ENCODE measurements at regions of chr10 and their contacts with region 1.

Region 1: GRCh38 chr10:78042058-78042751 is 8.5 kb downstream of the RPS24 start:
- DNase-seq: peak in 1 of 4 experiments; percentile 49
- ATAC-seq: peak; percentile 30
- H3K4me3 ChIP-seq: no peak overlapping the region
- H3K27ac ChIP-seq: peak overlapping the region; percentile 20; the same call in 2 of the 3 replicates
- H3K4me1 ChIP-seq: peaks cover 14 to 52% of the 10 kb centered on the region in 2 experiments; a peak in 4 of 5 replicates
- H3K27me3 ChIP-seq: no peaks in the 10 kb centered on the region
- CTCF ChIP-seq: no peak
- EP300 ChIP-seq: no peak
- POLR2A ChIP-seq: no peak; the same call in 1 of the 2 replicates
- RAD21 ChIP-seq: no peak

Region 2: GRCh38 chr10:77907900-77908717 is 134.1 kb before region 1 on chr10:
- CTCF ChIA-PET with region 1: no interaction called
- POLR2A ChIA-PET with region 1: no interaction called
- in situ Hi-C with region 1: no loop called
- intact Hi-C with region 1: no loop called
- DNase-seq: peak; percentile 73 to 85 (median 73)
- ATAC-seq: peak; percentile 82
- H3K4me3 ChIP-seq: no peak overlapping the region
- H3K27ac ChIP-seq: peak overlapping the region; percentile 79
- H3K4me1 ChIP-seq: peaks cover 54 to 68% of the 10 kb centered on the region in 2 experiments
- H3K27me3 ChIP-seq: no peaks in the 10 kb centered on the region
- CTCF ChIP-seq: peak; percentile 78 to 87 (median 82)
- EP300 ChIP-seq: peak; percentile 18; the same call in 1 of the 2 replicates
- POLR2A ChIP-seq: no peak
- RAD21 ChIP-seq: peak; percentile 65 to 85

Region 3: GRCh38 chr10:78029269-78030226 is 12.7 kb before region 1 on chr10 and contains the start of gene POLR3A:
- CTCF ChIA-PET with region 1: no interaction called
- POLR2A ChIA-PET with region 1: interaction called, 23 read pairs
- in situ Hi-C with region 1: no loop called
- intact Hi-C with region 1: no loop called
- DNase-seq: peak; percentile 95 to 99 (median 96)
- ATAC-seq: peak; percentile 82
- H3K4me3 ChIP-seq: peak within 1 kb of the TSS; percentile 89
- H3K27ac ChIP-seq: peak within 1 kb of the TSS; percentile 87
- H3K4me1 ChIP-seq: peaks cover 8% of the 10 kb centered on the region in 2 experiments; a peak in 3 of 5 replicates
- H3K27me3 ChIP-seq: no peaks in the 10 kb centered on the region
- CTCF ChIP-seq: peak; percentile 91 to 96 (median 93)
- EP300 ChIP-seq: no peak; the same call in 1 of the 2 replicates
- POLR2A ChIP-seq: peak; percentile 92
- RAD21 ChIP-seq: peak; percentile 38 to 46
- polyA plus RNA-seq, gene POLR3A: 14.9 to 28.8 TPM

Region 4: DNA sequence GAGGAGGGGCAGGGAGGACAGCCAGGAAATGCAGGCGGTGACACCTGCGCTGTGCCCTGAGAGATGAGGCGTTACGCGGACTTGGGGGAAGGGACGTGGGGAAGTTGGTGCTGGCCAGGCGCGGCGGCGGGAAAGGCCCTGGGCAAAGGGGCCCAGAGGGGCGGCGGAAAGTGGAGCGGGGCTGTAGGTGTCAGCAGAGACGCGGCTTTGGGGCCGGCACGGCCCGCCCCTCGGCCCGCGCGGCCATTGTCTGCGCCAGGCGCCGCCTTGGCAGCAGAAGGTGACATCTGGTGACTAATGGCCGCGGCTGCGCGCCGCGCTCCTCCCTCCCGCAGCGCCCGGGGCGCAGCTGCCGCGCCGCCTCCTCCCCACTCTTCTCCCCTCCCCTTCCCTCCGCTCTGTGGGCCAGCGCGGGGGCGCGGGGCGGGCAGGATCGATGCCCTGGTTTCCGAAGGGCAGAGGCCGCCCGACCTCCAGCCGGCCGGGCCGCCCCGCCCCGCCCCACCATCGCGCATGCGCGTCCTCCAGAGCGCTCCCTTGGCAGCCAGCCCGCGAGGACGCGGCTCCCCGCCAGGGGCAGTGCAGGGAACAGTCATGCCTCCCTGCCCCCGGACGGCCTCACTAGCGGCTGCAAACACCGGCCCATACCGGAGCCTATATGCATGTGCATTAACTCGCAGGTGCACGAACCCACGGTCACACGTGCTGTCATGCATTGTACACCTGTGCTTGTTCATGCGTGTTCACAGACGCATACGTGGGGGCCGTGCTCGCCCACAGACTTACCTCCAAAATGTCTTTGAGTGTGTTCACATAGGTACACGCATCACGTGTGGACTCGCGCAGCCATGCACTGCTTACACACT is 261.0 kb after region 1 on chr10:
- CTCF ChIA-PET with region 1: interaction called, 5 read pairs
- POLR2A ChIA-PET with region 1: no interaction called
- in situ Hi-C with region 1: no loop called
- intact Hi-C with region 1: loop called (anchors 2 kb)
- DNase-seq: peak; percentile 95 to 100 (median 100)
- ATAC-seq: peak; percentile 97
- H3K4me3 ChIP-seq: peak overlapping the region; percentile 58
- H3K27ac ChIP-seq: peak overlapping the region; percentile 39; the same call in 2 of the 3 replicates
- H3K4me1 ChIP-seq: peaks cover 5 to 13% of the 10 kb centered on the region in 2 experiments; a peak in 4 of 5 replicates
- H3K27me3 ChIP-seq: peaks cover 6 to 26% of the 10 kb centered on the region in 2 experiments; a peak in 3 of 5 replicates
- CTCF ChIP-seq: peak; percentile 82 to 87 (median 85)
- EP300 ChIP-seq: no peak
- POLR2A ChIP-seq: peak; percentile 66
- RAD21 ChIP-seq: peak; percentile 52 to 53

Measured in K562 (cell line).